ENCODE measurements at regions of chr2 and their contacts with region 1.

Region 1: GRCh38 chr2:47323009-47323821 is 79.7 kb upstream of the MSH2 start:
- DNase-seq: peak; percentile 73
- H3K4me3 Mint-ChIP-seq: no peak overlapping the region
- H3K27ac Mint-ChIP-seq: no peak overlapping the region
- H3K4me1 Mint-ChIP-seq: no peaks in the 10 kb centered on the region
- H3K27me3 Mint-ChIP-seq: no peaks in the 10 kb centered on the region
- CTCF ChIP-seq: peak; percentile 97

Region 2: DNA sequence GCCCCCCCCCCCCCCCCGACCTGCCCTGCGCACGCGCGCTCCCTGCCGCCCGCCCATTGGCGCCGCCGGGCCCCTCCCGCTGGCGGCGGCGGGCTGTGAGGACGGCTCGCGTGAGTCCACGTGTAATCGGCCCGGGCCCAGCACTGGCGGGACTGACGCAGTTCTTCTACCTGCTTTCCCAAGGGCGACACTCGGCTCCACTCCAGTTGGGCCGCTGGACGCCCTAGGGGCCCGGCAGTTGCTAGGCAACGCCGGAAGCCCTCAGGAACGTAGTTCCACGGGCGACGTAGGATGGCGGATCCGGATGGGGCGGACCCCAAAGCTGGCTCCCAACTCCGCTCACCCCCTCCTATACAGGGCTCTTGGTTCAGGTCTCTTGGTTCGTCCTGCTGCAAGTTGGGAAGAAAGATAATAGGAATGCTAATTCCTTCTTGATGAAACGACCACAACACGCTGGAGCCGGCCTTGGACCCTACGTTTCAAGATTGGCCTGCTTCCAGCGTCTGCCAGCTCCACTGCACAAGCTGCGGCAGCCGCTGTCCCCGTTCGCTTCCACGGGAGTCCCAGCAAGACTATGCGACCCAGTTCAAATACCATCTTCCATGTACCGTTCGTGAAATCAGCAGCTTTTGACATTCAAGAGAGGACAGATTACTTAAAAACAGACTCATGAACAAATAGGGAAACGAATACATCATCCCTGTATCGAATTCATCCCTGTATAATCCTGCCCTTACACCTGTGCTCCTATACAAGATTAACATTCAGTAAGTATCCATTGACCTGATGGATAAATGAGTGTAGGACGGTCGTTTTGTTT is 407.2 kb before region 1 on chr2:
- CTCF ChIA-PET with region 1: interaction called, 20 read pairs
- POLR2A ChIA-PET with region 1: interaction called, 4 read pairs
- intact Hi-C with region 1: loop called (anchors 1 kb)
- DNase-seq: peak; percentile 86
- H3K4me3 Mint-ChIP-seq: peak overlapping the region; percentile 82
- H3K27ac Mint-ChIP-seq: peak overlapping the region; percentile 63
- H3K4me1 Mint-ChIP-seq: peaks cover 42% of the 10 kb centered on the region
- H3K27me3 Mint-ChIP-seq: no peaks in the 10 kb centered on the region
- CTCF ChIP-seq: no peak

Region 3: DNA sequence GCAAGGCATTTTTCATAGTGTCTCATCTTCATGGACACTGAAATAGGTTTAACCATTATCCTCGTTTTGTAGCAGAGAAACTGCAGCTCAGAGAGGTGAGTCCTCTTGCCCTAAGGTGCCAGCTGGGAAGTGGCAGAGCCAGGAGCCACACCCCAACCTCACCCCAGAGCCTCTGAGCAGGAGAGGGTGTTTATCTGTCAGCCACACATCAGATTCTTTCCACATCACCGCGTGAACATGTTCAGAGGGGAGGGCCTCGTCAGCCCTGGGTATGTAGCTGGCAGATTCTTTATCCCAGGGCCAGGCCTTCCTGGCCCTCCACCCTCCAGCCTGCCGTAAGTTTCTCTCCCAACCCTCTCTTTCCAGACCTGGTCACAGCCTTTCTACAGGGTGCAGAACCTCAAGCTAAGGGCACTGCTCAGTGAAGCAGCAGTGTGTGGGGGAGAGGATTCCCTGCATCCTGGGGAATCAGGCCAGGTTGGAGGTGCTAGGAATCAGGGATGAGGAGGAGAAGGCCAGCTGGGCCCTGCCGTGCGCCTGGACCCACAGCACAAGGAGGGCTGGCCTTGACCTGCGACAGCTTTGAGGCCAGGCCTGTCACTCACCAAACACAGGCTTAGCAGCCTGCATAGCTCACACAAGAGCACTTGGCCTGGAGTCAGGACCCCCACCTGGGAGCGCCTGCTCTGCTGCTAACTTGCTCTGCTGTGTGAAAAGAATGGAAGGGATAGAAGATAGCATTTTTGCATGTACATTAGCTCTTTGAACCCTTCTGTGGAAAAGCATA is 296.3 kb before region 1 on chr2:
- CTCF ChIA-PET with region 1: interaction called, 10 read pairs
- POLR2A ChIA-PET with region 1: no interaction called
- intact Hi-C with region 1: no loop called
- DNase-seq: peak; percentile 54
- H3K4me3 Mint-ChIP-seq: no peak overlapping the region
- H3K27ac Mint-ChIP-seq: peak overlapping the region; percentile 66
- H3K4me1 Mint-ChIP-seq: peaks cover 23% of the 10 kb centered on the region
- H3K27me3 Mint-ChIP-seq: no peaks in the 10 kb centered on the region
- CTCF ChIP-seq: no peak

Region 4: GRCh38 chr2:47155091-47155876 is 167.9 kb before region 1 on chr2 and contains the start of gene STPG4:
- CTCF ChIA-PET with region 1: no interaction called
- POLR2A ChIA-PET with region 1: no interaction called
- intact Hi-C with region 1: no loop called
- DNase-seq: no peak
- H3K4me3 Mint-ChIP-seq: no peak within 1 kb of the TSS
- H3K27ac Mint-ChIP-seq: peak within 1 kb of the TSS; percentile 50
- H3K4me1 Mint-ChIP-seq: peaks cover 11% of the 10 kb centered on the region
- H3K27me3 Mint-ChIP-seq: no peaks in the 10 kb centered on the region
- CTCF ChIP-seq: no peak
- total RNA-seq, gene STPG4: 0.83 TPM in 1 of 2 replicates, not detected in the other

Region 5: GRCh38 chr2:47179388-47179787 is 143.8 kb before region 1 on chr2:
- CTCF ChIA-PET with region 1: interaction called, 12 read pairs
- POLR2A ChIA-PET with region 1: interaction called, 8 read pairs
- intact Hi-C with region 1: no loop called
- DNase-seq: no peak
- H3K4me3 Mint-ChIP-seq: no peak overlapping the region
- H3K27ac Mint-ChIP-seq: no peak overlapping the region
- H3K4me1 Mint-ChIP-seq: peaks cover 7% of the 10 kb centered on the region
- H3K27me3 Mint-ChIP-seq: no peaks in the 10 kb centered on the region
- CTCF ChIP-seq: no peak

Region 6: GRCh38 chr2:47300609-47301276 is 22.5 kb before region 1 on chr2:
- CTCF ChIA-PET with region 1: interaction called, 16 read pairs
- POLR2A ChIA-PET with region 1: interaction called, 5 read pairs
- intact Hi-C with region 1: no loop called
- DNase-seq: no peak
- H3K4me3 Mint-ChIP-seq: no peak overlapping the region
- H3K27ac Mint-ChIP-seq: no peak overlapping the region
- H3K4me1 Mint-ChIP-seq: peaks cover 19% of the 10 kb centered on the region
- H3K27me3 Mint-ChIP-seq: no peaks in the 10 kb centered on the region
- CTCF ChIP-seq: no peak

Region 7: DNA sequence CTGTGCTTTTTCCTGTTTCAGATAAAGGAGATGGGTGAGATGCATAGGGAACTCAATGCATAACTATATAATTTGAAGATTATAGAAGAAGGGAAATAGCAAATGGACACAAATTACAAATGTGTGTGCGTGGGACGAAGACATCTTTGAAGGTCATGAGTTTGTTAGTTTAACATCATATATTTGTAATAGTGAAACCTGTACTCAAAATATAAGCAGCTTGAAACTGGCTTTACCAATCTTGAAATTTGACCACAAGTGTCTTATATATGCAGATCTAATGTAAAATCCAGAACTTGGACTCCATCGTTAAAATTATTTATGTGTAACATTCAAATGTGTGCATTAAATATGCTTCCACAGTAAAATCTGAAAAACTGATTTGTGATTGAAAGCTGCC is 63.3 kb after region 1 on chr2:
- CTCF ChIA-PET with region 1: interaction called, 281 read pairs
- POLR2A ChIA-PET with region 1: no interaction called
- intact Hi-C with region 1: no loop called
- DNase-seq: no peak
- H3K4me3 Mint-ChIP-seq: no peak overlapping the region
- H3K27ac Mint-ChIP-seq: no peak overlapping the region
- H3K4me1 Mint-ChIP-seq: no peaks in the 10 kb centered on the region
- H3K27me3 Mint-ChIP-seq: no peaks in the 10 kb centered on the region
- CTCF ChIP-seq: no peak